Right cardiac atrium (tissue), 5 donors: ENCODE measurements at regions of chr16 and their contacts with region 1.

Region 1: GRCh38 chr16:74862741-74863244 is 88.2 kb upstream of the FA2H start:
- DNase-seq: no peak
- ATAC-seq: peak in 1 of 2 donors; percentile 67
- H3K4me3 ChIP-seq: no peak overlapping the region
- H3K27ac ChIP-seq: no peak overlapping the region
- H3K4me1 ChIP-seq: no peaks in the 10 kb centered on the region
- H3K27me3 ChIP-seq: no peaks in the 10 kb centered on the region

Region 2: DNA sequence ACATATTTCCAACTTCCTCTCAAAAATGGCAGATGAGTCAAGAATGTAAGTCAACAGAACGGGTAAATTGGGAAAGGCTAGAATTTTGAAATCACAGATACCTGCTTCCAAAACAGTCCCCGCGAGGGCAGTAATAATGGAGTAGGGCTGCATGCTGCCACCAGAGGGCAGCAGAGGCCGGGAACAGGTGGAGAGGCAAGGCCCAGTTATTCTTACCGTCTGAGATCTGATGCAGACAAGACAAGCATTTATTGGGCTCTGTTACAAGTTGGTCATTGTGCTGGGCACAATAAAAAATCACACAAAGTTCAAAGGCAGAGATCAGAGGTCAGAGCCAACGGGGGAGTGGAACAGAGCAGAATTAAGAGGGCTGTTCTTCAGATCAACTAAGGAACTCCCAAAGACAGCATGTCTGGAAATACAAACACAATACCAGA is 153.3 kb before region 1 on chr16:
- intact Hi-C with region 1: loop called in 3 of 4 experiments (anchors 5 kb)
- DNase-seq: peak; percentile 77 to 90 (median 87)
- ATAC-seq: peak; percentile 88 to 91
- H3K4me3 ChIP-seq: no peak overlapping the region
- H3K27ac ChIP-seq: no peak overlapping the region
- H3K4me1 ChIP-seq: no peaks in the 10 kb centered on the region
- H3K27me3 ChIP-seq: no peaks in the 10 kb centered on the region

Region 3: GRCh38 chr16:74813109-74813641 is 49.6 kb before region 1 on chr16:
- intact Hi-C with region 1: loop called in 1 of 4 experiments (anchors 10 kb)
- DNase-seq: peak; percentile 70 to 90 (median 89)
- ATAC-seq: peak; percentile 98
- H3K4me3 ChIP-seq: no peak overlapping the region
- H3K27ac ChIP-seq: no peak overlapping the region
- H3K4me1 ChIP-seq: no peaks in the 10 kb centered on the region
- H3K27me3 ChIP-seq: no peaks in the 10 kb centered on the region